PC-9 (cell line): ENCODE measurements at regions of chr10 and their contacts with region 1.

Region 1: GRCh38 chr10:102713814-102714620 is at the start of gene ARL3:
- DNase-seq: peak; percentile 89 to 93
- H3K4me3 ChIP-seq: peak within 1 kb of the TSS; percentile 86
- H3K27ac ChIP-seq: no peak within 1 kb of the TSS
- H3K4me1 ChIP-seq: peaks cover 5% of the 10 kb centered on the region; the same call in 1 of the 2 replicates
- H3K27me3 ChIP-seq: no peaks in the 10 kb centered on the region
- CTCF ChIP-seq: peak; percentile 41; the same call in 1 of the 2 replicates
- total RNA-seq, gene ARL3: 7.1 and 9.7 TPM in 2 replicates

Region 2: GRCh38 chr10:102503281-102504220 is 210.5 kb before region 1 on chr10 and contains the start of gene SUFU:
- CTCF ChIA-PET with region 1: no interaction called
- POLR2A ChIA-PET with region 1: no interaction called
- intact Hi-C with region 1: loop called (anchors 2 kb)
- DNase-seq: peak; percentile 85 to 88
- H3K4me3 ChIP-seq: peak within 1 kb of the TSS; percentile 74
- H3K27ac ChIP-seq: no peak within 1 kb of the TSS
- H3K4me1 ChIP-seq: peaks cover 34% of the 10 kb centered on the region
- H3K27me3 ChIP-seq: no peaks in the 10 kb centered on the region
- CTCF ChIP-seq: peak; percentile 79
- total RNA-seq, gene SUFU: 16.9 and 20.2 TPM in 2 replicates

Region 3: GRCh38 chr10:102641880-102642735 is 71.9 kb before region 1 on chr10:
- CTCF ChIA-PET with region 1: no interaction called
- POLR2A ChIA-PET with region 1: no interaction called
- intact Hi-C with region 1: loop called (anchors 5 kb)
- DNase-seq: peak; percentile 84 to 90
- H3K4me3 ChIP-seq: peak overlapping the region; percentile 70
- H3K27ac ChIP-seq: peak overlapping the region; percentile 75
- H3K4me1 ChIP-seq: 0 out of 2 replicates have a peak, but pooled peaks cover 4% of the 10 kb centered on the region
- H3K27me3 ChIP-seq: no peaks in the 10 kb centered on the region
- CTCF ChIP-seq: no peak

Region 4: GRCh38 chr10:102678842-102679289 is 35.2 kb before region 1 on chr10:
- CTCF ChIA-PET with region 1: no interaction called
- POLR2A ChIA-PET with region 1: interaction called, 27 read pairs
- intact Hi-C with region 1: no loop called
- DNase-seq: peak in 1 of 2 experiments; percentile 55
- H3K4me3 ChIP-seq: no peak overlapping the region
- H3K27ac ChIP-seq: no peak overlapping the region
- H3K4me1 ChIP-seq: no peaks in the 10 kb centered on the region
- H3K27me3 ChIP-seq: no peaks in the 10 kb centered on the region
- CTCF ChIP-seq: peak; percentile 73

Region 5: DNA sequence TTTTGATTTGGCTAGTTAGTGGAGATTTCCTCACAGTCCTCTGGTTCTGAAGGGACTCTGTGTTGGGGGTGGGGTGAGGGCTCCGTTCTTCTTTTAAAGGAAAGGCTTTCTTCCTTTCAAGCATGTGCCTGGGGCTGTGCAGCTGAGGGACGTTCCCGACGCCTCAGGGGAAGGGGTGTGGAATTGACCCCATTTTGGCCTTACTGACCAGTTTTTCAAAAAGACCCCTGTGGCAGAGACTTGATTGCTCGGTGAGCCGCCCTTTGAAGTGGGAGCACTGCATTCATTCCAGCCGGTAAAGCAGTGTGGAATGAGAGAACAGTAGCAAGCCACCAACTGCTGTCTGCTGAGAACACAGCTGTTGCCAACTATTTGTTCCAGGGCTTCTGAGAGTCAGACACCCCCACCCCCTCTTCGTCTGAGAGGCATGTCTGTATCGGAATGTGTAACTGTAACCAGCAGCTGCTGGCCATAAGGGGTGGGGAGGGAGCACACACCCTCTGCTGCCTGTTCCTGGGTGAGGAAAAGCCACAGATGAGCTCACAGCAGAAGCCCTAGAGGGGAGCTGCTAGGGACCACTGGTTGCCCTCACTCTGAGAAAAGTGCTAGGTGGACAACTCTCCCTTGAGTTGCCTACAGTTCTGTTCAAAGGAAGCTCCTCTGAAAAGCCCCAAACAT is 62.9 kb after region 1 on chr10:
- CTCF ChIA-PET with region 1: no interaction called
- POLR2A ChIA-PET with region 1: no interaction called
- intact Hi-C with region 1: no loop called
- DNase-seq: peak in 1 of 2 experiments; percentile 16
- H3K4me3 ChIP-seq: no peak overlapping the region
- H3K27ac ChIP-seq: no peak overlapping the region
- H3K4me1 ChIP-seq: peaks cover 14% of the 10 kb centered on the region
- H3K27me3 ChIP-seq: no peaks in the 10 kb centered on the region
- CTCF ChIP-seq: no peak

Region 6: DNA sequence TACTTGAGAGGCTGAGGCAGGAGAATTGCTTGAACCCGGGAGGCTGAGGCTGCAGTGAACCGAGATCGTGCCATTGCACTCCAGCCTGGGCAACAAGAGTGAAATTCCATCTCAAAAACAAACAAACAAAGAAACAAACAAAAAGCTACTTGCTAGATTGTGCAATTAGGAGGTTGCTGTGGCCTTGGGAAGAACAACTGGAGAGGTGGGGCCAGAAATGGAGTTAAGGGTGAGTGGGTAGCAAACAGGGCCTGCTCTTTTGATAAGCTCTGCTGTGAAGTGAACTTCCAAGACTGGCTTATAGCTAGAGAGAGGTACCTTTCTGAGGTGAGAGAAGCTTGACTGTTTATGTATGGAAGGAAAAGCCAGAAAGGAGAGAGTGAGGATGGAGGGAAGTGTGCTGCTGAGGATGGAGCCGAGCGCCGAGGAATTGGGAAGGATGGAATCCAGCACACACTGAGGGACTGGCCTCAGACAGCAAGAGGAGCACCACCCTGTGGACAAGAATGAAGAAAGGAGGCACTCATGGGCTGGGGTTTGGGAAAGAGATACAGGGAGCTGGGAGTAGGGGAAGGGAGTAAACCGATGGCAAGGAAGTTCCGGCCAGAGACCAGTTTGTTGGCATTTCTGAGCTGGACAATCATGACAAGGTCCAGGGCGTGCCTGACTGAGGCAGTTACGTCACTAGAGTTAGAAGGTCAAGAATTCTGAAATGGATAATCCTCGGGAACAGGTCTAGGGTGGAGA is 524.7 kb after region 1 on chr10:
- CTCF ChIA-PET with region 1: interaction called, 5 read pairs
- POLR2A ChIA-PET with region 1: no interaction called
- intact Hi-C with region 1: loop called (anchors 10 kb)
- DNase-seq: peak; percentile 82 to 96
- H3K4me3 ChIP-seq: no peak overlapping the region
- H3K27ac ChIP-seq: peak overlapping the region; percentile 100
- H3K4me1 ChIP-seq: peaks cover 58% of the 10 kb centered on the region
- H3K27me3 ChIP-seq: no peaks in the 10 kb centered on the region
- CTCF ChIP-seq: peak; percentile 57; the same call in 1 of the 2 replicates

Region 7: DNA sequence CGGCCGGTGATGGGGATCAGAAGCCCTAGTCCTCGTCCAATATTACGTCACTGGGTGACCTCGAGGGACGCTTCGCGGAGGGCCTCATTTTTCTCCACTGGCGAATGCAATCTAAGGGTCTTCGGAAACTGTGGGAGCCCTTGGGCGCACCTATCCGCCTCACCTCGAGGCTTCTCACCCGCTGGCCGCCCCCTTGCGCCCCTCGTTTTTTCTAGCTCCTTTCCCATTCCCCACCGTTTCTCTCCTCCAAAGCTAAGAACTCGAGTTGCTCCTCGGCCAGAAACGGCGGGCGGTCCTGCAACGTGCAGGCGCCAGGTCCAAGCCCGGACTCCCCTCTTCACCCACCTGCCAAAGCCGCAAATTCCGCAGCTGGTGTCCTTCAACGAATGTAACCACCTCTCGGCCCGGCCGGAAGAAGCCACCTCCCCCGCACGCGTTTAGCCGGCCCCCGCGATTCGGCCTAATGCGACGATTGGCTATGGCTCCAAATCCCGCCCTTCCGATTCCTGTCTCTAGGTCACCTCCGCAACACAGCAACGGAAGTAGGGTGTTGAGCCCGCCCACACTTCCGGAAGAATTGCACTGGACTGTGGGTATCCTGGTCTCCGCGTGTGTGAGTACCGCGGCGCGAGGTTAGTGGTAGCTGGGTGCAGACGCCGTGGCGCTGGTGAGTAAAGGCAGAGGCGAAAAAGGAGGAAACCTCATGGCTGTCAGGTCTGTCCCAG is 682.2 kb after region 1 on chr10 and contains the starts of genes ATP5MK and PDCD11:
- CTCF ChIA-PET with region 1: no interaction called
- POLR2A ChIA-PET with region 1: interaction called, 18 read pairs
- intact Hi-C with region 1: no loop called
- DNase-seq: peak; percentile 89 to 95
- H3K4me3 ChIP-seq: peak within 1 kb of the TSS; percentile 77
- H3K27ac ChIP-seq: peak within 1 kb of the TSS; percentile 45
- H3K4me1 ChIP-seq: peaks cover 30% of the 10 kb centered on the region
- H3K27me3 ChIP-seq: no peaks in the 10 kb centered on the region
- CTCF ChIP-seq: no peak
- total RNA-seq, gene ATP5MK: 198 and 230 TPM in 2 replicates
- total RNA-seq, gene PDCD11: 20.4 and 20.5 TPM in 2 replicates